Dorsolateral prefrontal cortex (tissue), 120 donors: ENCODE measurements at regions of chr14 and their contacts with region 1.

Region 1: GRCh38 chr14:50532502-50533240 is at the start of gene MAP4K5:
- DNase-seq: peak; percentile 84 to 94 (median 92)
- H3K4me3 ChIP-seq: peak within 1 kb of the TSS; percentile 52 to 98 (median 91)
- H3K27ac ChIP-seq: peak within 1 kb of the TSS; percentile 76 to 99 (median 97)
- H3K27me3 ChIP-seq: no peaks in the 10 kb centered on the region
- CTCF ChIP-seq: peak; percentile 72 to 99 (median 92)
- total RNA-seq, gene MAP4K5: 52.1 to 233 (median 97.3) TPM

Region 2: GRCh38 chr14:49862089-49862673 is 670.5 kb before region 1 on chr14:
- intact Hi-C with region 1: loop called (anchors 5 kb)
- DNase-seq: peak; percentile 63 to 86 (median 78)
- H3K4me3 ChIP-seq: peak overlapping the region; percentile 40 to 95 (median 77)
- H3K27ac ChIP-seq: peak overlapping the region; percentile 81 to 100 (median 98)
- H3K27me3 ChIP-seq: no peaks in the 10 kb centered on the region
- CTCF ChIP-seq: peak; percentile 87 to 100 (median 99)

Region 3: DNA sequence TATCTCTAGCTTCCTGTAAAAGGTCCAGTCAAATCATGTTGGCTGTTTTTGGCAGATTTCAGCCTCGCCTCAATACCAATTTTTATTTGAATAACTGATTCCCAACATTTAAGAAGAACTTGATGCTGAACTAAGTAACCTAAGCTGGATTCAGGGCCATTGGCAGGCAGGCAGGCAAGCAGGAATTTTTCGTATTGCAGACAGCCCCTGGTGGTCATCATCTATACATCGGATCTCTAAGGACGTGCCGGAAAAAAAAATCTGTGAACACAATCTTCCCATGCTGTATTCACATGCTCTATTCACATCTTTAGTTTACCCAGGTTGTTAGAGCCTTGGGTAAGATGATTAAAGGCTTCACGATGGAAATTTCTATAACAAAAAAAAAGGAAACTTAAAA is 423.3 kb before region 1 on chr14:
- intact Hi-C with region 1: loop called in 1 of 2 experiments (anchors 10 kb)
- DNase-seq: no peak
- H3K4me3 ChIP-seq: no peak overlapping the region
- H3K27ac ChIP-seq: peak overlapping the region in 1 of 59 donors; percentile 23
- H3K27me3 ChIP-seq: no peaks in the 10 kb centered on the region
- CTCF ChIP-seq: peak in 7 of 56 donors; percentile 6 to 29 (median 16)

Region 4: DNA sequence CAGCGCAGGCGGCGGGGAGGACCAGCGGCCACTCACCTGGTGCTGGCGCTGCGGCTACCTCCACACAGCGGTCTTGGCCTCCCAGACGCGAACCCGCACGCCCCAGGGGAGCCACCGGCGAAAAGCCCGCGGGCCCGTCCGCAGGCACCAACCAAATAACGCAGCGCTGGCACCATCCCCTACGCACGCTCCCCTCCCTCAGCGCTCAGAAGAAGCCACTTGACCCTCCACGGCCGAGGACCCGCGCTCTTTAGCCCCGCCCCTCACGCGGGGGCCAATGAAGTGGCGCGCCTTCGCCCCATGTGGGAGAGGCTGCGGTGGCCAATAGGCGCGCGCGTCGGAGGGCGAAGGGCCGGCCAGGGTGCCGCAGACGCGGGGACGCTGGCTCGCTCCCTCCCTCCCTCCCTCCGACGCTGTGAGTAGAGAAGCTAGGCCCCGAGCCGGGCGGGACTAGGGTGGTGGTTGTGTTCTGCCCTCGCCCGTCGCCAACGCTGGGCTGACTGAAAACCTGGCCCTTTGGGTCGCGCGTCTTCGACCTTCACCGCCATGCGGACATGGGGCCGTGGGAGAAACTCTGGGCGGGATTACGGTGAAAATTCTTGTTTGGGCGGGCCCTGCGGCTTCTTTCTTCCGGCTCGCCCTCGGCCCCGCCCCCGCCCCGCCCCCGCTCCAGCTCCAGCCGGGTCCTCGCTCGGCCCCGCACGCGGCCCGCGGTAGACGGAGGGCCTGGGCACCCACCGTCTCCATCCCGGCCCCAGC is 220.5 kb before region 1 on chr14 and contains the starts of genes DMAC2L and L2HGDH:
- intact Hi-C with region 1: loop called in 1 of 2 experiments (anchors 5 kb)
- DNase-seq: peak; percentile 89 to 97 (median 94)
- H3K4me3 ChIP-seq: peak within 1 kb of the TSS; percentile 65 to 100 (median 91)
- H3K27ac ChIP-seq: peak within 1 kb of the TSS; percentile 58 to 96 (median 93)
- H3K27me3 ChIP-seq: no peaks in the 10 kb centered on the region
- CTCF ChIP-seq: peak in 40 of 56 donors; percentile 1 to 55 (median 32)
- total RNA-seq, gene DMAC2L: 12.3 to 38.0 (median 23.5) TPM
- total RNA-seq, gene L2HGDH: 8.9 to 22.1 (median 15.0) TPM

Region 5: GRCh38 chr14:50335389-50335788 is 197.3 kb before region 1 on chr14:
- intact Hi-C with region 1: loop called in 1 of 2 experiments (anchors 5 kb)
- DNase-seq: peak in 9 of 10 donors; percentile 51 to 88 (median 71)
- H3K4me3 ChIP-seq: peak overlapping the region in 45 of 59 donors; percentile 0 to 50 (median 23)
- H3K27ac ChIP-seq: peak overlapping the region; percentile 76 to 96 (median 92)
- H3K27me3 ChIP-seq: no peaks in the 10 kb centered on the region
- CTCF ChIP-seq: peak in 21 of 56 donors; percentile 5 to 46 (median 20)

Region 6: GRCh38 chr14:50396631-50397390 is 135.9 kb before region 1 on chr14 and contains the start of gene CDKL1:
- intact Hi-C with region 1: loop called in 1 of 2 experiments (anchors 2 kb)
- DNase-seq: peak in 8 of 10 donors; percentile 25 to 75 (median 48)
- H3K4me3 ChIP-seq: peak within 1 kb of the TSS; percentile 55 to 86 (median 75)
- H3K27ac ChIP-seq: peak within 1 kb of the TSS; percentile 18 to 88 (median 76)
- H3K27me3 ChIP-seq: no peaks in the 10 kb centered on the region
- CTCF ChIP-seq: peak in 2 of 56 donors; percentile 13 to 17
- total RNA-seq, gene CDKL1: 18.9 to 74.8 (median 43.2) TPM